ENCODE measurements at regions of chr9 and their contacts with region 1.

Region 1: DNA sequence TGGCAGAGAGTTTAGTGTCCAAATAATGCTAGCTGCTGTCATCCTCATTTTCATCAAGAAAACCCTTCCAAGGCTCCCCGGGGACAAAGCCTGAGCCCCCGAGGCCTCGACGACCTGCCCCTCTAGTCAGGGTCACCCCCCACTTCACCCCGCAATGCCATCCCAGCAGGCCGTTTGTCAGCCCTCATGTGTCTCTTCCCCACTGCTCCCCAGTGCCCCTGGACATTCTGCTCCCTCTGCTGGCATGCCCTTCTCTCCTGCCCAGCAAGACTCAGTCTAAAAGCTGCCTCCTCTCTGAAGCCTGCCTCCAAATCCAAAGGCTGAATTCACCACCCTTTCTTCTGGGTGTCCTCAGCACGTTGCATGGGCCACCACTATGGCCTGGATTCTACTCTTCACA is 59.3 kb downstream of the PAX5 start:
- DNase-seq: no peak
- H3K4me3 ChIP-seq: no peak overlapping the region
- H3K27ac ChIP-seq: no peak overlapping the region
- H3K4me1 ChIP-seq: peaks cover 25% of the 10 kb centered on the region
- H3K27me3 ChIP-seq: no peaks in the 10 kb centered on the region
- CTCF ChIP-seq: no peak

Region 2: DNA sequence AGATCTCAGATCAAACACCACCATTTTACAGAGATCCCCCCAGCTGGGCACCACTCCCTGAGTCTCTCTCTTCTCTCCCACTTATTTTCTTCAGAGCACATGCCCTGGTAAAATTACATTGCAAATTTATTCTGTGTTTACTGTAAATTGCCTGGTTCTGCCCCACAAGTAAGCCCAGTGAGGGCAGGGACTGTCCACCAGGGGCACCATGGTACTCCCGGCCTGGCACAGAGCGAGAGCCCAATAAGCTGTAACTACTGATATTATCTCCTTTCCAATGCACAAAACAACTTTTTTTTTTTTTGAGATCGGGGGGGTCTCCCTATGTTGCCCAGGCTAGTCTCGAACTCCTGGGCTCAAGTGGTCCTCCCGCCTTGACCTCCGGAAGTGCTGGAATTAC is 63.7 kb before region 1 on chr9:
- CTCF ChIA-PET with region 1: interaction called, 4 read pairs
- POLR2A ChIA-PET with region 1: interaction called, 10 read pairs
- intact Hi-C with region 1: no loop called
- DNase-seq: no peak
- H3K4me3 ChIP-seq: no peak overlapping the region
- H3K27ac ChIP-seq: no peak overlapping the region
- H3K4me1 ChIP-seq: 0 out of 2 replicates have a peak, but pooled peaks cover 3% of the 10 kb centered on the region
- H3K27me3 ChIP-seq: peaks cover 41% of the 10 kb centered on the region; the same call in 1 of the 2 replicates
- CTCF ChIP-seq: no peak

Region 3: DNA sequence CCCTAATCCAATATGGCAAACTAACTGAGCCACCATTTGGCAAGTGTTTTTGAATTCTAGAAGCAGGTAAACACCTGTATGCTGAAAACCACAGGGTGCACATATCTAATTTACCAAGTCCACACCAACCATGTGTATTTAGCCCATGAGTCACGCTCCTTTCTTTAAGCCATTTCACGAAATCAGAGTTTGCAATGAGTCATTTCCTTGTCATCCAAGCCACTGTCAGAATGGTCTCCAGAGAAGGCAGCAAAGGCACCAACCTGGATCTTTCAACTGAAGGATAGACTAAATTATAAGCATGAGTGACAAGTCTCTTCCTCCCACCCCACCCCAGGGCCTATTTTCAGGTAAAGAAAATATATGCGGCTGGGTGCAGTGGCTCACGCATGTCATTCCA is 50.7 kb before region 1 on chr9:
- CTCF ChIA-PET with region 1: no interaction called
- POLR2A ChIA-PET with region 1: no interaction called
- intact Hi-C with region 1: loop called (anchors 10 kb)
- DNase-seq: peak; percentile 50 to 95
- H3K4me3 ChIP-seq: no peak overlapping the region
- H3K27ac ChIP-seq: 0 out of 2 replicates have a peak overlapping the region, but pooled peaks have one; percentile 32
- H3K4me1 ChIP-seq: peaks cover 22% of the 10 kb centered on the region
- H3K27me3 ChIP-seq: no peaks in the 10 kb centered on the region
- CTCF ChIP-seq: no peak

Region 4: DNA sequence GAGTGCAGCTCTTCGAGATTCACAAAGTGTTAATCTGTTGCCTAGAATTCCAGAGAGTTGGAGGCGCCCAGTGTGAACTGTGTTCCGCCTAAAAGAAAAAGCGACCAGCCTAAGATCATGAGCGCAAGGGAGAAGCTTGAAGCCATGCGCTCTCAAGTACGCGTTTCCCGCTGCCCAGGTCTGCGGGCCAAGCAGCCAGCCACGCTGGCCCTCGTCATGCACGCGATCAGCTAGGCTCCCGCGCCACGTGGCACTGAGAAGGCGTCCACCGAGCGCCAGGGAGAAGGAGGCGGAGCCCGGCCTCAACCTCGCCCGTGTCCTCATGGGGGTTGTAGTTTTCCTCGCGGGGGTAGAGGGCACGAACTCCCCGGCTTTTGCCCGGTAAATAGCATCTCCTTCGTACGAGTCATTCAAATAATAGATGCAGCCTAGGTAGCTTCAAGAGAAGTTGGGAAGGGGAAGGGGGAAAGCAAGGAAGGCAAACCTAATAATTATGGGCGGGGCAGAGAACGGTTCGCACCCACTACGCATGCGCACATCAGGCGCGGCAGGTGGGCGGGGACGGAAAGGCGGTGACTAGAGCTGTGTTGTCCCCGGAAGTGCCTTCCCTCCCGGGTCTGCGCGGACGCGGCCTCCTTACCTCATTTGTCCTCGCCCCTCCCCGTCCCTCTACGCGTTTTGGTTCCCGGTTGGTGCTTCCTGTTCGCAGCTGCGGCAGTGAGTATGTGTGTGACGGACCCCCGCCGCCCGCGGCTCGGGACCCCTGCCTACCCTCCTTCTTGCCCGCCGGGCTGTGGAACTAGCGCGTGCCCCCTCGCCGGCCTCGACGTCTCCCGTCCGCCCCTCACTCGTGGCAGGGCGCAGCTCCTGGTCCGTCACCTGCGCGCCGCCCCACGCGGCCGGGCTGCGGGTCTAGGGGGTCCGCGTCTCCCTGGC is 145.4 kb after region 1 on chr9 and contains the start of gene ZCCHC7:
- CTCF ChIA-PET with region 1: no interaction called
- POLR2A ChIA-PET with region 1: no interaction called
- intact Hi-C with region 1: no loop called
- DNase-seq: peak; percentile 77 to 88
- H3K4me3 ChIP-seq: peak within 1 kb of the TSS; percentile 92
- H3K27ac ChIP-seq: peak within 1 kb of the TSS; percentile 51
- H3K4me1 ChIP-seq: 0 out of 2 replicates have a peak, but pooled peaks cover 12% of the 10 kb centered on the region
- H3K27me3 ChIP-seq: no peaks in the 10 kb centered on the region
- CTCF ChIP-seq: no peak
- total RNA-seq, gene ZCCHC7: 14.1 and 15.9 TPM in 2 replicates